Activated naive CD4-positive, alpha-beta T cell treated with anti-CD3 and anti-CD28 coated beads for 36 hours (primary cell): ENCODE measurements at regions of chr3 and their contacts with region 1.

Region 1: GRCh38 chr3:24154013-24154695 is 209.1 kb downstream of the NR1D2 start:
- DNase-seq: no peak
- H3K4me3 Mint-ChIP-seq: no peak overlapping the region
- H3K27ac Mint-ChIP-seq: peak overlapping the region; percentile 4
- H3K4me1 Mint-ChIP-seq: peaks cover 33% of the 10 kb centered on the region
- H3K27me3 Mint-ChIP-seq: peaks cover 5% of the 10 kb centered on the region

Region 2: DNA sequence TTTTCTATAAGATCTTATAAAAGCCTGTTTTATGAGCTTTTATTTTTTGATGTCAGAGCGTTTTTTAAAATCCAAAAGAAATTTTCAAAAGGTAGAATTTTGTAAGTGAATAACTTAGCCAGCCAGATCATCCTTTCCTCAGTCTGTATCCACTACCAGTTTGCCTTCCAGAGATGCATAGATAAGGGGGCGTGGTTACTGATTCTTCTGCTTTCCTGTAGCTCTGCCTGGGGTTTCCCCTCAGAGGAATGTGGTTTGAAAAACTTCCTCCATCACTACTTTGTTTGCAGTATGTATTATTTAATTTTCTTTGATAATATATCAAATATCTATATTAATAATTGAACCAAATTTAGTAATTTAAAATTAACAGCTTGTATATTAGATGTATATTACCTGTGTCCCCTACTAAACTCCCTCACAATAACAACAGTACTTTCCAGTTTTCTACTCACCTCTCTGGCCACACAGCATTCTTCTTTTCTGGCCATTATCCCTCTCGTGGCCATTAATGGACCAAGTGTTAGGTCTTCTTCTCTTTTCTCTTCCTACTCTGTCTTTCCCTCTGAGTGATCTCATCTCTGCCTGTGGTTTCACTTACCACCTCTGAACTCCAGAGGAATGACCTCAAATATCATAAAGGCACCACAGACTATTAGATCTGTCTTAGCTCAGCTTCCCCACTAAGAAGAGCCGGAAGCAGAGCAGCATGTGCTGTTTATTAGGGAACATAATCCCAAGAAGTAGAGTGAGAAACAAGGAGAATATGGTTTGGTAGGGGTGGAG is 711.4 kb before region 1 on chr3:
- CTCF ChIA-PET with region 1: no interaction called
- intact Hi-C with region 1: loop called (anchors 2 kb)
- DNase-seq: peak; percentile 28
- H3K4me3 Mint-ChIP-seq: no peak overlapping the region
- H3K27ac Mint-ChIP-seq: no peak overlapping the region
- H3K4me1 Mint-ChIP-seq: peaks cover 43% of the 10 kb centered on the region
- H3K27me3 Mint-ChIP-seq: no peaks in the 10 kb centered on the region

Region 3: DNA sequence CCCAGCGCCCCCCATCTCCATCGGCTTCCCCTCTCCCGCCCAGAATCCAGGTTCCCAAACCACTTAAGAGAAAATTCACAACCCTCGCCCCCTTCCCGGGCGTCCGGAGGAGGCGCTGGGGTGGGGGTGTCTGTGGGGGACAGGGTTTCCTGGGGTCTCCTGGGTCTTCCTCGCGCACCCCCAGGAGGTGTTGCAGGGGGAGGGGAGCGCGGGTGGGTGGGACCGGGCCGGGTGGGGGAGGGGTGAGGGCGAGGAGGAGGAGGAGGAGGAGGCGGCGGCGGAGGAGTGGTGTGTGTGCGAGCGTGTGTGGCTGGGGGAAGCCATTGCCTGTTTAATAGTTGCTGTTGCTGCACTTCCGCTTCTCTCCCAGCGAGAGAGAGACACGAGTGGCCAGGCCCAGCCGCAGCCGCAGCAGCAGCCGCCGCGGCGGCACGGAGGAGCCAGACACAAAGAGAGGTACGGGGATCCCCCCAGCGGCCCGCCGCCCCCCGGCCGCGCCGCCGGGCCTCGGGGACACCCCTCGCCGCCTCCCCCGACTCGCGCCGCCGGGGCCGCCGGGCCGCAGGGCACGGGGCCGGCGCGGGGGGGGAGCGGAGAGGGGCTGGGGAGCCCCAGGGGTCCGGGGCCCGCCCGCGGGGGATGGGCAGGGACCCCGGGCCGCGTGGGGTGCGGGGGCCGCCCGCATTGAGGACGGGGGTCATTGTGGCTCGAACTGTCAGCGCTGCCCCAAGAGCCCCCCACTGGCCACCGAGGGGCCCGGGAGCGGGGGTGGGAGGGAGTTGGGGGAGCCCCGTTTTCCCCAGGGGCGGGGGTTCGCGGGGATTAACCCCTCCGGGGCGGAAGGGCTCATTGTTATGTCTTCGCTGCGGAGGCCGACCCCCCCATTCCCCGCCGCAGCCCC is 348.3 kb before region 1 on chr3 and contains the start of gene UBE2E1:
- CTCF ChIA-PET with region 1: no interaction called
- intact Hi-C with region 1: loop called (anchors 5 kb)
- DNase-seq: peak; percentile 73
- H3K4me3 Mint-ChIP-seq: peak within 1 kb of the TSS; percentile 91
- H3K27ac Mint-ChIP-seq: peak within 1 kb of the TSS; percentile 89
- H3K4me1 Mint-ChIP-seq: peaks cover 36% of the 10 kb centered on the region
- H3K27me3 Mint-ChIP-seq: peaks cover 7% of the 10 kb centered on the region
- total RNA-seq, gene UBE2E1: 66.0 to 66.6 TPM

Region 4: DNA sequence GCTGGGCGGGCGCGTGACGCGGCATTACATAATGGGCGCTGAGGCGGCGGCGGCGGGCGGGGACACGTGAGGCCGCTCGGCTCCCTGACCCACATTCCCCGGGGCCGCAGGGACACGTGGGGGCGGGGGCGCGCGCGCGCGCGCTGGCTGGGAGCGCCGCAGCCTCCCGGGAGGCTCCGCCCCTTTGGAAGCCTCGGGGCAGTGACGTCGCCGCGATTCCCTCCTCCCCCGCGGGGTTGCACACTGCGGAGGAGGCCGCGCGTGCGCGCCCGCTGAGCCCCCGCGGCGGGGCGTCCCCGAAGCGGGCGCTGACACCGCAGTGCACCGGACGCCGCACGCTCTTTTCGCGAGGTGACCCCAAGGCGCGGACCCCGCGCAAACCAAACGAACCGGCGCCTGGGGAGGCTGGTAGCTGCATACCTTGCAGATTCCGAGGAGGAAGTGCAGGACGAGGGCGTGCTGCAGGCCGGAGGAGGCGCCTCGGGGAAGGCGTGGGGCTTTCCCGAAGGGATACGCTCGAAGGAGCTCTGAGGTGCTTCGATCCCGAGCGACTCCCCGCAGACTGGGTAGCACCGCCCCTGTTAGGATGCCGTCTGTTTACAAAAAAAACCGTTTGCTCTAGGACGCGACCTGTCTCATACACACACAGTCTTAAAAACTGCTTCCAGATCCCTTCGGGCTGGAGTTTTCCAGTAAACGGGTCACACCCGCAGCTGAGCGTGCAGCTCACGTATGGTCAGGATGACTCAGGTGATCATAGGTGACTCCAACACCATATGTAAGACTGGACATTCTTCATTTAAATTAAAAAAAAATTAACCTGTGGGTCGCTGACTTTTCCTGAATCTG is 208.0 kb before region 1 on chr3:
- CTCF ChIA-PET with region 1: no interaction called
- intact Hi-C with region 1: loop called (anchors 1 kb)
- DNase-seq: peak; percentile 96
- H3K4me3 Mint-ChIP-seq: peak overlapping the region; percentile 80
- H3K27ac Mint-ChIP-seq: peak overlapping the region; percentile 85
- H3K4me1 Mint-ChIP-seq: peaks cover 42% of the 10 kb centered on the region
- H3K27me3 Mint-ChIP-seq: peaks cover 4% of the 10 kb centered on the region

Region 5: DNA sequence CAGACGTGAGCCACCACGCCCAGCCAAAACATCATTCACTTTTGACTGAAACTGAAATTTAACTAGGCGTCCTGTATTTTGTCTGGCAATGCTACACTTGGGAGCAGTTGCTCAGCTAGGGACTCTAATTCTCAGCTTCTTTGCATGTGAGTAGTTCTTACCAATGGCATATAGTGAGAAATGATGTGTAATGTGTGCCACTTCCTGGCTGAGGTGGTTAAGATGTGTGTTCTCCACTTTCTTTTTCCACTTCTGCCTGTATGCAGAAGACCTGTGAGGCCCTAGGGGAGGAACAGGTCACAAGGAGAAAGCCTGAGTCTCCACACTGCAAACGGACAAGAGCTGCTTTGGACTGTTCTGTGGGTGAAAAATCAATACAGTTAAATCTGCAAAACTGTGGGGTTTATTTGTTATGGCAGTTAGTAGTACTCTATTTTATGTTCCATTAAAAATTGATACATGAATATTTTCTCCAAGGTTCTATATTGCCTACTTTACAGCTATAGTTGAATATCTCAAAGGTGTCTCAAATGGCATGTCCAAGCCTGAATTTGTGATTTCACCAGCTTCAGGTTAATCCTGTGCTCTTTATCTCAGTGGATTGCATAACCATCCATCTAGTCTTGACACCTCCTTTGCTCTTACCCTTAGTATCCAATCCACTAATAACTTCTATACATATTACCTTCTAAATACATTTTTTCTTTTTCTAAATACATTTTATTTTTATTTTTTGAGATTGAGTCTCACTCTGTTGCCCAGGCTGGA is 149.8 kb before region 1 on chr3:
- CTCF ChIA-PET with region 1: interaction called, 4 read pairs
- intact Hi-C with region 1: loop called (anchors 1 kb)
- DNase-seq: peak; percentile 58
- H3K4me3 Mint-ChIP-seq: no peak overlapping the region
- H3K27ac Mint-ChIP-seq: peak overlapping the region; percentile 28
- H3K4me1 Mint-ChIP-seq: peaks cover 11% of the 10 kb centered on the region
- H3K27me3 Mint-ChIP-seq: peaks cover 4% of the 10 kb centered on the region

Region 6: DNA sequence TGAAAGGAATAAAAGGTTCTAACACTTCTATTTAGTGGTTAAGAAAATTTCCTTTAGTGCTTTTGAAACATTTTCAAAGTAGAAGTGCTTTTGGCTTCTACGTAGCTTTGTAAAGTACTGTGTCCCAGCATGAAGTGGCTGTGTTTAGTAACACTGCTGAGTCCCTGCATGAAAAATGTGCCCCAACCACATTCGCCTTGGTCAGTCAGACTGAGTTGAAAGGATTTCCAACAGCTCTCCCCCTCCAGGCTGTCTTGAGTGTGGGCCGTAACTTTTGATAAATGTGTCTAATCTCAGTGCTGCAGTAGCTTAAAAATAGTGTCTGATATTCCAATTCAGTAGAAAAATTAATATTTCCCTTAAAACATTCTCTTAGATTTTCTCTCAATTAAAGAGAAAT is 94.1 kb before region 1 on chr3:
- CTCF ChIA-PET with region 1: no interaction called
- intact Hi-C with region 1: no loop called
- DNase-seq: no peak
- H3K4me3 Mint-ChIP-seq: no peak overlapping the region
- H3K27ac Mint-ChIP-seq: no peak overlapping the region
- H3K4me1 Mint-ChIP-seq: no peaks in the 10 kb centered on the region
- H3K27me3 Mint-ChIP-seq: peaks cover 5% of the 10 kb centered on the region

Region 7: DNA sequence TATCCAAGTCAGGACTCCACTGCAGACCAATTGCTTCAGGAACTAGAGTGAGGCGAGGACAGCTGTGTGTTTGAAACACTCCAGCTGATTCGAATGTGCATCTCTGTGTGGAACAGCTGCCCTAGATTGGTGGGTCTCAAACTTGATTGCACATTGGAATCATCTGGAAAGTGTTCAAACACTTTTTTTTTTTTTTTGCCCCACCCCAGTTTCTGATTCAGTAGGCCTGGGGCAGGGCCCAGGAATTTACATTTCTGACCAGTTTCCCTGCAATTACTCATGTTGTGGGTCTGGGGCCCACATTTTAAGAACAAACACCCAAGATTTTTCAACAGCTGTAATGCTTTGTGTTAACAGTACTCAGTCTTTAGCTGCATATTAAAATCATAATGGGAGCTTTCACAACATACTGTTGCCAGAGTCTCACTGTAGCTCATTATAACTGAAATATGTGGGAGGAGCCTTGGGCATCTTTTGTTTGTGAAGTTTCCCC is 52.4 kb before region 1 on chr3:
- CTCF ChIA-PET with region 1: no interaction called
- intact Hi-C with region 1: loop called (anchors 1 kb)
- DNase-seq: peak; percentile 19
- H3K4me3 Mint-ChIP-seq: no peak overlapping the region
- H3K27ac Mint-ChIP-seq: no peak overlapping the region
- H3K4me1 Mint-ChIP-seq: peaks cover 3% of the 10 kb centered on the region
- H3K27me3 Mint-ChIP-seq: peaks cover 3% of the 10 kb centered on the region

Region 8: GRCh38 chr3:25664810-25665314 is 1510.7 kb after region 1 on chr3 and contains the start of gene TOP2B:
- CTCF ChIA-PET with region 1: no interaction called
- intact Hi-C with region 1: loop called (anchors 10 kb)
- DNase-seq: peak; percentile 97
- H3K4me3 Mint-ChIP-seq: peak within 1 kb of the TSS; percentile 92
- H3K27ac Mint-ChIP-seq: peak within 1 kb of the TSS; percentile 100
- H3K4me1 Mint-ChIP-seq: peaks cover 42% of the 10 kb centered on the region
- H3K27me3 Mint-ChIP-seq: no peaks in the 10 kb centered on the region
- total RNA-seq, gene TOP2B: 113 to 114 TPM